Activated CD4-positive, alpha-beta memory T cell treated with anti-CD3 and anti-CD28 coated beads, Interleukin-2, amount 10 ng/mL, durations not matched to agents 7 days and 5 days (primary cell): ENCODE measurements at regions of chr6 and their contacts with region 1.

Region 1: DNA sequence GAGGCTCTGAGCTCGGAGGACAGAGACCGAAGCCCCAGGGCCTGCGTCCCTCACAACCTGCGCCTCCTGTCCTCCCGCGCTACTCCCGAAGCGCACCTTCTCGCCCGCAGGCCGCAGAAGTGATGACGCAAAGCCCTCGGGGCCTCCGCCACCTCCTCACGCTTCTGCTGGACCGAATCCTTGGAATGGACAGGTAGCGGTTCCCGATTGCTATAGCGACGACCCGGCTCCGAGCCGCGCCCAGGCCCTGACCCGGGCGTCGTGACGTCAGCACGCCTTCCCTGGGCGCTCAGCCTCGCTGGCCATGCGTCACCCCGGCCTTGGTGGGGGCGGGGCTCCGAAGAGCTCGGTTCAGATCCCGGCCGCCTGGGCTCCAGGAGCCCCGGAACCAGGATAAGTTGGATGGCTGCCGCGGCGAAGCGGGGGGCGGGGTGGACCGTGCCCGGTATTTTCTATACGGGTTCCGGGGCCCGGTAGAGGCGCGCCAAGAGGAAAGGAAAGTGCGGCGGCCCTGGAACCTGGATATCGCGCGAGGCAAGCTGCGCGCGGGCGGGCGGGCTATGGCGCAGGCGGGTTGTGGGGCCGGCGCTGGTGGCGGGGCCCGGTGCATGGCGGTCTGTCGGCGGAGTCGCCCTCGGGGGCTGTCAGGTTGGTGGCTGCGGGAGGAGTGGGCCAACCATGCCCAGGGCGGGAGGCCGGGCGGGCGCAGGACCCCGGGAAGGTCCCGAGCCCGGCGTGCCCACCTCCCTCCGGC is at the start of gene ZNF76:
- DNase-seq: peak; percentile 91
- H3K4me3 Mint-ChIP-seq: peak within 1 kb of the TSS; percentile 92
- H3K27ac Mint-ChIP-seq: peak within 1 kb of the TSS; percentile 79
- H3K4me1 Mint-ChIP-seq: peaks cover 50% of the 10 kb centered on the region
- H3K27me3 Mint-ChIP-seq: no peaks in the 10 kb centered on the region
- total RNA-seq, gene ZNF76: 42.6 to 42.7 TPM

Region 2: GRCh38 chr6:35247642-35248231 is 11.6 kb before region 1 on chr6:
- CTCF ChIA-PET with region 1: interaction called, 9 read pairs
- POLR2A ChIA-PET with region 1: interaction called, 11 read pairs
- DNase-seq: no peak
- H3K4me3 Mint-ChIP-seq: peak overlapping the region; percentile 9
- H3K27ac Mint-ChIP-seq: no peak overlapping the region
- H3K4me1 Mint-ChIP-seq: peaks cover 25% of the 10 kb centered on the region
- H3K27me3 Mint-ChIP-seq: no peaks in the 10 kb centered on the region